Transverse colon (tissue), 4 donors: ENCODE measurements at regions of chr9 and their contacts with region 1.

Region 1: GRCh38 chr9:109320742-109321448 is at the start of gene EPB41L4B:
- DNase-seq: peak; percentile 94
- H3K4me3 ChIP-seq: peak within 1 kb of the TSS; percentile 4 to 67 (median 52)
- H3K27ac ChIP-seq: peak within 1 kb of the TSS; percentile 80 to 93 (median 86)
- H3K4me1 ChIP-seq: peaks cover 3 to 35% (median 16%) of the 10 kb centered on the region in 4 donors
- H3K27me3 ChIP-seq: peaks cover 21% of the 10 kb centered on the region
- CTCF ChIP-seq: peak; percentile 87 to 98 (median 93)
- EP300 ChIP-seq: no peak
- POLR2A ChIP-seq: no peak
- total RNA-seq, gene EPB41L4B: 76.8 to 159 (median 110) TPM

Region 2: DNA sequence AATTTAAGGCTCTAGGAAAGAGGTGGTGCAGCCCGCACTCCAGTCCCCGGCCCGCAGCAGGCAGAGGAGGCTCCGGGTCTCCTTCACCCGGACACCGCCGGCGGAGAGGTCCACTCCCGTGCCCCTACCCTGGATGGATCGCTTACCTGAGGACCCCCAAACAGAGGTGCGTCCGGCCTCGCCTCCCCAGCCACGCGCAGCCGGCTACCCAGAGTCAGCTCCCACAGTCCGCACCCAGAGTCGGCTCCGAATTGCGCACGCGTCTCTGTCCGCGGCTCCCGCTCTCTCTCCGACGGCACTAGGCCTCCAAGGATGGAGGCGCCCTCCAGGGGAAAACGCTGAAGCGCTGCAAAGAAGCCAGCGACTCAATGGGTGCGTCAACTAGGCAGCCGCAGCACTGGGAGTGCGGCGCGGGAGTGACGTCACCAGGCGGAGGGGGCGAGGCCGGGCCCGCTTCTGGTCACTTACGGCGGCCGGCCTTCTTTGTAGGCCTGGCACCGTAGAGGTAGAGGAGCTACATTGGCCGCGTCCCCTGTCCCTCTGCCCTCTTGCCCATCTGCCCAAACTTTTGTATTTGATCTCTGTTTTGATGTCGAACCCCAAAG is 387.1 kb before region 1 on chr9 and contains the start of gene ELP1:
- in situ Hi-C with region 1: no loop called
- intact Hi-C with region 1: loop called (anchors 10 kb)
- DNase-seq: peak; percentile 95
- H3K4me3 ChIP-seq: peak within 1 kb of the TSS; percentile 73 to 83 (median 75)
- H3K27ac ChIP-seq: peak within 1 kb of the TSS; percentile 89 to 94 (median 92)
- H3K4me1 ChIP-seq: peaks cover 8 to 21% (median 18%) of the 10 kb centered on the region in 4 donors
- H3K27me3 ChIP-seq: no peaks in the 10 kb centered on the region
- CTCF ChIP-seq: peak in 2 of 5 experiments; percentile 18 to 42
- EP300 ChIP-seq: no peak
- POLR2A ChIP-seq: peak; percentile 66
- total RNA-seq, gene ELP1: 7.9 to 18.1 (median 13.3) TPM

Region 3: DNA sequence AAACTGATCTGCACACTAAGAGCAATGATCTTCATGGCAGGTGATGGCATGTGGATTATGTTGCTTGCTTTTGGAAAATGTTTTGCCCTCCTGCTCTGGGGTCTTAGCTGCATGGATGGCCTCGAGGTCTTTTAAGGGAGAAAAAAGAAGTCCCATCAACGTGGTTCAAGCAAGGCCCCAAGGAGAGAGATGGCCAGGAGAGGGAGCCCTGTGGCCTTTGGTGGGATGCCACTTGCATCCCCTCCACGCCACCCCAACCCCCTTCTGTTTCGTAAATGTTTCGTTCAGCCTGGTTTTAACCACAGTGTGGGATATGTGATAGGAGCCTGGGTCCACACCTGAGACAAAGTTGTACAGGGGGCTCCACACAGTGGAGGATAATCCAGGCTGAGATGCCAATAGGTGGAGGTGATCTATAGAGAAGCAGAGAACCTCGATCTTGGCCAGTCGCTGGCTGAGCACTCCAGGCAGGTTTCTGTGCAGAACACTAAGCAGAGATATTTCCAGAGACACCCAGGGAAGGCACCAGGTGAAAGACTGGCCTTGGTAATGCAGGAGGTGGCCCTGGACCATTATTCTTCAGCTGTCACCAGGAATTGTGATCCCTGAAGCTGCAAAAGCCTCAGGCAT is 128.0 kb before region 1 on chr9:
- in situ Hi-C with region 1: loop called in 1 of 4 experiments (anchors 10 kb)
- intact Hi-C with region 1: no loop called
- DNase-seq: peak; percentile 48
- H3K4me3 ChIP-seq: no peak overlapping the region
- H3K27ac ChIP-seq: no peak overlapping the region
- H3K4me1 ChIP-seq: no peaks in the 10 kb centered on the region
- H3K27me3 ChIP-seq: no peaks in the 10 kb centered on the region
- CTCF ChIP-seq: peak; percentile 17 to 68 (median 44)
- EP300 ChIP-seq: no peak
- POLR2A ChIP-seq: no peak

Region 4: DNA sequence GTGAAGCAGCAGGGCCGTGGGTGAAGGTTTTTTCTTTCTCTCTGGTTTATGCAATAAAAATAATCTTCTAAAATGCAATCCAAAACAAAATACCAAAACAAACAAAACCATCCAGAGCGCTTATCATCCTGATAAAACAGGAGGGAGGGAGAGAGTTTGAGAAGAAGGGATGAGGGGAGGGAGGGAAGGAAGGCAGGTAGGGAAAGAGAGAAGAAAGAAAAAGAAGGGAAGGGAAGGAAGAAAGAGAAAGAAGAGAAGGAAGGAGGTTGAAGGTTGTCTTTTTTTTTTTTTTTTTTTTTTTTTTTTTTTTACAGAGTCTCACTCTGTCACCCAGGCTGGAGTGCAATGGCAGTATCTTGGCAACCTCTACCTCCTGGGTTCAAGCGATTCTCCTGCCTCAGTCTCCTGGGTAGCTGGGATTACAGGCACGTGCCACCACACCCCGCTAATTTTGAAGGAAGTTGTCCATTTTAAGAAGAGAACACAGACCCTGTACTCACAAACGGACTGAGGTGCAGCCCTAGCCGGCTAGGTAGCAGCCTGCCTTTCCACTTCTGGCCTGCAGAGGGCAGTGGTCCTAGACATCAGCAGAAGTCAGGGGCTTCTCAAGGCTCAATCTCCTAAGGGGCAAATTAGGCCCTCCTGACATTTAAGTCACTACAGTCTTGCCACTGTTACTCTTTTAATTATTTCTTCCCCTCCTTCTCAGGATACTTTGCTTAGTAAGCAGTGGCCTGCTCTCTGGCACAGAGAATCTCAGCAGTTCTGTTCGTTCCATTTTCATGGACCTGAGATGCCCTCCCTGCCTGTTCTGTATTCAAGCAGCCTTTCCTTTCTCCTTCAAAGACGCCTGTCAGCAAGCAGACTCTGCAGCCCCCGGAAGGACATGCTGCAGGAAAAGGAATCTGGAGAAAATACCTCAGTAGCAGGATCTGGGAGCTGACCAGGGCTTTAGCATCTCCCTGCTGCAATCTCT is 76.5 kb before region 1 on chr9:
- in situ Hi-C with region 1: loop called in 3 of 4 experiments (anchors 5 to 10 kb)
- intact Hi-C with region 1: loop called (anchors 1 kb)
- DNase-seq: peak; percentile 78
- H3K4me3 ChIP-seq: no peak overlapping the region
- H3K27ac ChIP-seq: no peak overlapping the region
- H3K4me1 ChIP-seq: peaks cover 0 to 6% (median 0%) of the 10 kb centered on the region in 4 donors
- H3K27me3 ChIP-seq: no peaks in the 10 kb centered on the region
- CTCF ChIP-seq: peak; percentile 88 to 94 (median 92)
- EP300 ChIP-seq: no peak
- POLR2A ChIP-seq: no peak

Region 5: DNA sequence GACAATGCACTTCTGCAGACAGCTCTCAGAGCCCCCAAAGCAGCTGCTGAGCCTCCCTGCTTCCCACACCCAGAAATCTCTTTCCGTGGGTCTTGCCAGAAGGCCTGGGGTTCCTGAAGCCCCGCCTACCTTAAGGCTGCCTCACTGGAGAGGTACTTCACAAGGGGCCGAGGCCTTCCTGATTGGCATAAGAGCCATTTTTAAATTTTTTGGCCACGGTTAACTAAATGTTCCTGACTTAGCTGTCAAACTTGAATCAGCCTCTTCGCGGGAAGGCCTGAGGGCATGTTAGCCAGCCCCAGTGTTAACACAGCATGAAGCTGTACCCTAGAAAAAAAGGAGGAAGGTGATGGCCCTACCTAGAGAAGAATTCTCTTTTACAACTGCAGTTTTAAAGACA is 20.7 kb after region 1 on chr9:
- in situ Hi-C with region 1: no loop called
- intact Hi-C with region 1: no loop called
- DNase-seq: no peak
- H3K4me3 ChIP-seq: no peak overlapping the region
- H3K27ac ChIP-seq: no peak overlapping the region
- H3K4me1 ChIP-seq: peaks cover 0 to 13% (median 6%) of the 10 kb centered on the region in 4 donors
- H3K27me3 ChIP-seq: no peaks in the 10 kb centered on the region
- CTCF ChIP-seq: no peak
- EP300 ChIP-seq: no peak
- POLR2A ChIP-seq: no peak